ENCODE measurements at regions of chr19 and their contacts with region 1.

Region 1: GRCh38 chr19:57240311-57241090 is at the start of gene ZNF805:
- DNase-seq: peak; percentile 91 to 98 (median 97)
- ATAC-seq: peak; percentile 89
- H3K4me3 ChIP-seq: peak within 1 kb of the TSS; percentile 70 to 88
- H3K4me3 Mint-ChIP-seq: peak within 1 kb of the TSS; percentile 93
- H3K27ac ChIP-seq: peak within 1 kb of the TSS; percentile 90 to 91
- H3K27ac Mint-ChIP-seq: peak within 1 kb of the TSS; percentile 97
- H3K4me1 ChIP-seq: peaks cover 20% of the 10 kb centered on the region
- H3K4me1 Mint-ChIP-seq: peaks cover 45% of the 10 kb centered on the region
- H3K27me3 ChIP-seq: no peaks in the 10 kb centered on the region
- H3K27me3 Mint-ChIP-seq: no peaks in the 10 kb centered on the region
- CTCF ChIP-seq: no peak
- total RNA-seq, gene ZNF805: 49.1 to 49.2 TPM

Region 2: DNA sequence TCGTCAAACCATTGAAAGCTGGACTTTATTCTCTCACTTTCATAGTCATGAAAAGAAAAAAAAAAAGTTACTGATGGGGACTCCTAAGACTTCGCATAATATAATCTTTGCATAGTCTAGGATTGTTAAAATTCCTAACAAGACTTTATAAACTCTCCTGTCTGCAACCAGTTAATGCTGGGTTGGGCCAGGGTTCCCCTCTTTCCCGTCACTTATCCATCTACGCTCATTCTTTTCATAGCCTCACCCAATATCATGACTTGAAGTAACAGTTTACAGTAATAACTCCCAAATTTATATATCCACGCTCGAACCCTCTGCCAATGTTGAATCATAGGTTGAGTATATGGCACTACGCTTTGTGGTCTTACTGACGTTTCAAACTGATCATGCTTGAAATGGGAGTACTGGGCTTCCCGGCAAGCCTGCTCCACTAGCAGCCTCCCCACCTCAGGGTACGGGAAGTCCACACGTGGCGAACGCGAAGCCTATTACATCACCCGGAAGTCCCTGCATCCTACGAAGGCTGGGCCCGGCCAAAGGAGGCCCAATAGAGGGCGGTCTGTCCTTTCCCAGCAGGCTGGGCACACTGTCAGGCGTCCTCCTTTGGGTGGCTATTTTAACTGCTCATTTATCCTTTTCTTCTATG is 39.0 kb after region 1 on chr19:
- CTCF ChIA-PET with region 1: no interaction called
- POLR2A ChIA-PET with region 1: no interaction called
- intact Hi-C with region 1: loop called (anchors 1 kb)
- DNase-seq: peak; percentile 55 to 94 (median 75)
- ATAC-seq: peak; percentile 64
- H3K4me3 ChIP-seq: peak overlapping the region; percentile 54 to 99
- H3K4me3 Mint-ChIP-seq: no peak overlapping the region
- H3K27ac ChIP-seq: peak overlapping the region; percentile 86 to 93
- H3K27ac Mint-ChIP-seq: no peak overlapping the region
- H3K4me1 ChIP-seq: peaks cover 28% of the 10 kb centered on the region
- H3K4me1 Mint-ChIP-seq: peaks cover 33% of the 10 kb centered on the region
- H3K27me3 ChIP-seq: no peaks in the 10 kb centered on the region
- H3K27me3 Mint-ChIP-seq: no peaks in the 10 kb centered on the region
- CTCF ChIP-seq: no peak

Region 3: DNA sequence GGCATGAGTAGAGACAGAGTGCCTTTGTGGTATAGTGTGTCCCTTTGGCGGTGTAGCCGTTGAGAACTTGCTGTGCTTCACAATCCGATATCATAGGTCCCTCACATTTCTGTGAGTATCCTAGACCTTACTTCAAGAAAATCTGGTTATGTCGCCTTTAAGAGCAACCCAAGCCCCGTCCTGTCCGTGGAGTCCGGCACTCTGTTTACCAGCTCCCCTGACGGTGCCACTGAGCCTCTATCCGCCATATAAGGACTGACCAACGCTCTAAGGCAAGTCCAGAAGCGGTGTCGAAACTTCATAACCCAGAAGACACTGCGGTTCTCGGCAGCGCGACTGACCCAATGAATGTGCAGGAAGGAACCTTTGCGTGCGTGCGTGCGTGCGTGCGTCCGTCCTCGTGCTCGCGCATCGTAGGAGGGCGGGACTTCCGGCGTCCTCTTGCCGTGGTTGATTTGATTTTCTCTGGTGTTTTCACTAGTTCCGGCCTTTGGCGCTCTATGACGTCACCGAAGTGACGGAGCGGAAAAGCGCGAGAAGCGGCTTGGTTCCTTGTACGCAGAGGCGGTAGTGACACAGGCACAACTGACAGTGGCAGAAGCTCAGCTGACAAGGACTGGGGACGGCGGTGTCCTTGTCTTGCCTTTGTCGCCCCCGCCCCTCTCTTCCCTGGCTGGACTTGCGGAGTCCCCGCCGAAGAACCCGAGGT is 122.7 kb after region 1 on chr19 and contains the starts of genes TRAPPC2B and ZNF547:
- CTCF ChIA-PET with region 1: no interaction called
- POLR2A ChIA-PET with region 1: no interaction called
- intact Hi-C with region 1: loop called (anchors 1 kb)
- DNase-seq: peak; percentile 96 to 99 (median 99)
- ATAC-seq: peak; percentile 89
- H3K4me3 ChIP-seq: peak within 1 kb of the TSS; percentile 63 to 66
- H3K4me3 Mint-ChIP-seq: peak within 1 kb of the TSS; percentile 86
- H3K27ac ChIP-seq: peak within 1 kb of the TSS; percentile 81 to 95
- H3K27ac Mint-ChIP-seq: peak within 1 kb of the TSS; percentile 98
- H3K4me1 ChIP-seq: peaks cover 12% of the 10 kb centered on the region
- H3K4me1 Mint-ChIP-seq: peaks cover 18% of the 10 kb centered on the region
- H3K27me3 ChIP-seq: no peaks in the 10 kb centered on the region
- H3K27me3 Mint-ChIP-seq: no peaks in the 10 kb centered on the region
- CTCF ChIP-seq: no peak
- total RNA-seq, gene TRAPPC2B: 8.6 to 9.9 TPM
- total RNA-seq, gene ZNF547: 0.72 to 0.81 TPM

Region 4: DNA sequence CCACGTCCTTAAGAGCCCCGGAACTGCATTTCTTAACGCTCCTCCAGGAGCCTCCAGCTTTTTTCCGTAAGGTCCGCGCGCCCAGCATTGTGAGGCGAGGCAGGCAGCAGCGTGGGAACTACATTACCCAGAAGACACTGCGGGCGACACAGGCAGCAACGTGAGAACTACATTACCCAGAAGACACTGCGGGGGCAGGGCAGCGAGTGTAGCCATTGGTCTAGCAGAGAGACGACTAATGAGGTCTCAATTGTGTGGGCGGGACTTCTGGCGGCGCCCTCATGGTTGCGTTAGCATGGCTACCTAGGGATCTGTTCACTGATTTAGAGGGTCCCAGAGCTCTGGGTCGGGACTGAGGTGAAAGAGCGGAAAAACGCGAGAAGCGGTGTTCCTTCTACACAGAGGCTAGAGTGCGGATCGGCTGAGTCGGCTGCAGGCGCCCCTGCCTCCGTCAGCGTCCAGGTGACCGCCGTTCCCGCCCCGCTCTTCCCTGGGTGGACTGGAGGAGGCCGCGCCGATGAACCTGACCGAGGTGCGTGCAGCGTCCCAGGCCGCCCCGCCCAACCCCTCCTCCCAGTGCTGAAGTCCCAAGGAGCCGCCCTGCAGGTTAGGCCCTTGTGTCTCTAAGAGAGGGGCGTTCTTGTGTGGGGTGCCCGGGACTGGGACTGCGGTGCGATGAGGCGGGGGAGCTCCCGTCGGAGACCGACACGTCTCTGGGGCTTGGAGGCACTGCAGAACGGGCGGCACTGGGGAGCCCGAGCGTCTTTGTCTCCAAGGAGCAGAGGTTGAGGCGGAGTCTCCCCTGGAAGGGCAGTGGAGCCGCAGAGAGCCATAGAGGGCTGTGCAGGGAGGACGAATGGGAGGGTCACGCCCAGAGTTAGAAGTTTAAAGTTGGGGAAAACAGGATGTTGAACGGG is 194.8 kb after region 1 on chr19 and contains the start of gene ZNF749:
- CTCF ChIA-PET with region 1: no interaction called
- POLR2A ChIA-PET with region 1: no interaction called
- intact Hi-C with region 1: loop called in 1 of 2 experiments (anchors 1 kb)
- DNase-seq: peak; percentile 93 to 100 (median 96)
- ATAC-seq: peak; percentile 99
- H3K4me3 ChIP-seq: peak within 1 kb of the TSS; percentile 57 to 86
- H3K4me3 Mint-ChIP-seq: peak within 1 kb of the TSS; percentile 99
- H3K27ac ChIP-seq: peak within 1 kb of the TSS; percentile 52 to 80
- H3K27ac Mint-ChIP-seq: peak within 1 kb of the TSS; percentile 97
- H3K4me1 ChIP-seq: peaks cover 11% of the 10 kb centered on the region
- H3K4me1 Mint-ChIP-seq: peaks cover 34% of the 10 kb centered on the region
- H3K27me3 ChIP-seq: no peaks in the 10 kb centered on the region
- H3K27me3 Mint-ChIP-seq: no peaks in the 10 kb centered on the region
- CTCF ChIP-seq: no peak
- total RNA-seq, gene ZNF749: 5.6 to 9.1 TPM

Region 5: DNA sequence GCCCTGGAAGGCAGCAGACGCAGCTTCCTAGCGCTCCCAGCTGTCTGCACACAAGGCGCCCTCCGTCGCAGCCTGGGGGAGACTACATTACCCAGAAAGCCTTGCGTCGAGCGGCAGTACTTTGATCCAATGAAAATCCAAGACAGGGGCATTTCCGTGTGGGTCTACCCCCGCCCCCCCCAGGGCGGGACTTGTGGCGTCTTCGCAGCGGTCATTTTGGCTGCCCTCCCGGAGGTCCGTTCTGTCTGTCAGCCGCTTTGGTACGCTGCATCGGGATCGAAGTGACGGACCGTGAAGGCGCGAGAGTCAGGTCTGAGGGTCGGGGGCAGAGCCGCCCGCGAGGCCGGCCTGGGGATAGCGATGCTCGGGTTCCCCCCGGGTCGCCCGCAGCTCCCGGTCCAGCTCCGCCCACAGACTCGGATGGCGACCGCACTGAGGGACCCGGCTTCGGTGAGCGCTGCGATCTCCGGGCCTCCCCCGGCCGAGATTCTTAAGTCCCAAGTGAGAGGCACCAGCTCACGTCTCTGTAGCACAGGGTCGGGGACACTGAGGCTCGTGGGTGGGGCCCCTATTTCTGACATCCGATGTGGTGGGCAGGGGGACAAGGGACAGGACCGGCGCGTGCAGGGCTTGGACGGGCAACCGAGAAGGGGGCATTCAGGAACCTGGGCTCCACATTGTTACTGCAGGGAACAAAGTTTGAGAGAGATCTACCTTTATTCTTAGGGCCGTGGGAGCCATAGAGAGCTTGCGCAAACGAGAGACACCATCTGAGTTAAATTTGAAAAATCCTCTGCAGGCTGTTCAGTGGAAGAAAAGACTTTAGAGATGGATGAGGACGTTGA is 392.7 kb after region 1 on chr19 and contains the start of gene ZNF211:
- CTCF ChIA-PET with region 1: no interaction called
- POLR2A ChIA-PET with region 1: no interaction called
- intact Hi-C with region 1: loop called in 1 of 2 experiments (anchors 1 kb)
- DNase-seq: peak; percentile 70 to 95 (median 89)
- ATAC-seq: peak; percentile 100
- H3K4me3 ChIP-seq: peak within 1 kb of the TSS; percentile 81 to 82
- H3K4me3 Mint-ChIP-seq: peak within 1 kb of the TSS; percentile 96
- H3K27ac ChIP-seq: peak within 1 kb of the TSS; percentile 60 to 78
- H3K27ac Mint-ChIP-seq: peak within 1 kb of the TSS; percentile 94
- H3K4me1 ChIP-seq: peaks cover 13% of the 10 kb centered on the region
- H3K4me1 Mint-ChIP-seq: peaks cover 29% of the 10 kb centered on the region
- H3K27me3 ChIP-seq: no peaks in the 10 kb centered on the region
- H3K27me3 Mint-ChIP-seq: no peaks in the 10 kb centered on the region
- CTCF ChIP-seq: no peak
- total RNA-seq, gene ZNF211: 34.4 to 35.5 TPM

Region 6: GRCh38 chr19:58182989-58183816 is 942.7 kb after region 1 on chr19 and contains the start of gene ZNF274:
- CTCF ChIA-PET with region 1: no interaction called
- POLR2A ChIA-PET with region 1: no interaction called
- intact Hi-C with region 1: loop called in 1 of 2 experiments (anchors 2 kb)
- DNase-seq: peak; percentile 88 to 96 (median 94)
- ATAC-seq: peak; percentile 86
- H3K4me3 ChIP-seq: peak within 1 kb of the TSS; percentile 90 to 94
- H3K4me3 Mint-ChIP-seq: peak within 1 kb of the TSS; percentile 91
- H3K27ac ChIP-seq: peak within 1 kb of the TSS; percentile 99 to 100
- H3K27ac Mint-ChIP-seq: peak within 1 kb of the TSS; percentile 100
- H3K4me1 ChIP-seq: peaks cover 9% of the 10 kb centered on the region
- H3K4me1 Mint-ChIP-seq: peaks cover 22% of the 10 kb centered on the region
- H3K27me3 ChIP-seq: no peaks in the 10 kb centered on the region
- H3K27me3 Mint-ChIP-seq: no peaks in the 10 kb centered on the region
- CTCF ChIP-seq: no peak
- total RNA-seq, gene ZNF274: 52.7 to 58.9 TPM

Measured in CD8-positive, alpha-beta T cell (primary cell).